ENCODE measurements at regions of chr3 and their contacts with region 1.

Region 1: DNA sequence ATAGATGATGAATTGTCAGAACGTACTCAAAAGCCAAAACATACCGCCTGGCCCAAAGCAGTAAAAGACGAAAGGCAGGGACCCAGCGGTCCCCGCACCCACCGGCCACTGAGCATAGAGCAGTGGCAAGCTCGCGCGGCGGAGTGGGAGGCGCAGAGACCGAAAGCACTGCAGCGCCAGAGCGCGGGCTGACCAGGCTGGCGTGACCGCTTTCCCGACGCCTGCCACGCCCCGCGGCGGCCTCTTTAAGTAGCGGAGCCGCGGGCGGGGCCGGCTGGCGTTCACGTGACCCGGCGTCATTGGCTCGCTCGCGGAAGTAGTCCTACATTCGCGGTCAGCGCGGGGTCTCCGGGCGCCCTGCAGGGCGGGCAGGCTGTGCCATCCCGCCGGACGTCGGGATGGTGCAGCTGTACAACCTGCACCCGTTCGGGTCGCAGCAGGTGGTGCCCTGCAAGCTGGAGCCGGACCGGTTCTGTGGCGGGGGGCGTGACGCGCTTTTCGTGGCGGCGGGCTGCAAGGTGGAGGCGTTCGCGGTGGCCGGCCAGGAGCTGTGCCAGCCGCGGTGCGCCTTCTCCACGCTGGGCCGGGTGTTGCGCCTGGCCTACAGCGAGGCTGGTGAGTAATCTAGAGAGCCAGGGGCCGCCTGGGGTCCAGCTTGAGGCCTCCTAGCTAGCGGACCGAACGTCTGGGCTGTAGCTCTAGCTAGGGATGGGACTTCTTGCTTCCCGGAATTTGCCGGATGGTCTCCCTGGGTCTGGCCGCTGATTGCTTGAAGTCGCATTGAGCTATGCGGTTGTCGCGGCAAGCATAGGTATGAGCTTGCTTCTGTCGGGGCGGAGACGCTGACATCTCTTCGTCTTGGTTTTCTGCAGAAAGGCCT is at the start of gene HPS3:
- DNase-seq: peak; percentile 89
- H3K4me3 Mint-ChIP-seq: peak within 1 kb of the TSS; percentile 93
- H3K27ac Mint-ChIP-seq: peak within 1 kb of the TSS; percentile 80
- H3K4me1 Mint-ChIP-seq: peaks cover 36% of the 10 kb centered on the region
- H3K27me3 Mint-ChIP-seq: peaks cover 16% of the 10 kb centered on the region
- total RNA-seq, gene HPS3: 33.0 to 33.7 TPM

Region 2: DNA sequence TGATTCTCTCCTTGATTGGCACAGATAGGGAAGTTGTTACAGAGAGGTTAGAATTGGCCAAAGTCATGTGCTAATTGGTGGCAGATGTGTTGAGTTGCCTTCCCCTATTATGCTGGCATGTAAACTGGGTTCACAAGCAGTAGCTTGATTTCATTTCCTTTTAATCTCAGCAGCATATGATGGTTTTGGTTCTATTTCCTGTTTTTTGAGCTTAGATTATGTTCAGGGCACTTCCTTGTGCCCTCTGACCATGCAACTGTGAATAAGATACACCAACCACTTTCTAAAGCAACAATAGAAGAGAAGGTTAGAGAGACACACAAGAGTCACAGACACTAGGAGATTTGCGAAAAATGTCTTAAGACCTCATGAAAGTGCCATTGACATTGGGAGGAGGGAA is 16.4 kb after region 1 on chr3:
- CTCF ChIA-PET with region 1: interaction called, 4 read pairs
- POLR2A ChIA-PET with region 1: interaction called, 10 read pairs
- DNase-seq: no peak
- H3K4me3 Mint-ChIP-seq: no peak overlapping the region
- H3K27ac Mint-ChIP-seq: no peak overlapping the region
- H3K4me1 Mint-ChIP-seq: peaks cover 6% of the 10 kb centered on the region
- H3K27me3 Mint-ChIP-seq: no peaks in the 10 kb centered on the region